ENCODE measurements at regions of chr7 and their contacts with region 1.

Region 1: GRCh38 chr7:106041140-106041717 is 70.9 kb downstream of the SYPL1 start:
- DNase-seq: peak in 3 of 9 donors; percentile 22 to 32 (median 25)
- ATAC-seq: peak; percentile 56
- H3K4me3 ChIP-seq: no peak overlapping the region
- H3K4me3 Mint-ChIP-seq: peak overlapping the region in 8 of 10 donors; percentile 5 to 68 (median 58)
- H3K27ac ChIP-seq: no peak overlapping the region
- H3K27ac Mint-ChIP-seq: peak overlapping the region in 8 of 9 donors; percentile 32 to 91 (median 73)
- H3K4me1 ChIP-seq: peaks cover 5 to 33% of the 10 kb centered on the region in 2 donors
- H3K4me1 Mint-ChIP-seq: peaks cover 18 to 58% (median 38%) of the 10 kb centered on the region in 7 donors
- H3K27me3 ChIP-seq: no peaks in the 10 kb centered on the region
- H3K27me3 Mint-ChIP-seq: peaks cover 0 to 48% (median 0%) of the 10 kb centered on the region in 5 donors

Region 2: GRCh38 chr7:105522062-105522936 is 518.9 kb before region 1 on chr7 and contains the start of gene PUS7:
- CTCF ChIA-PET with region 1: no interaction called
- POLR2A ChIA-PET with region 1: no interaction called
- intact Hi-C with region 1: loop called in 1 of 2 experiments (anchors 5 kb)
- DNase-seq: peak; percentile 53 to 81 (median 67)
- ATAC-seq: peak; percentile 97
- H3K4me3 ChIP-seq: peak within 1 kb of the TSS; percentile 68
- H3K4me3 Mint-ChIP-seq: peak within 1 kb of the TSS; percentile 92 to 99 (median 96)
- H3K27ac ChIP-seq: peak within 1 kb of the TSS; percentile 70
- H3K27ac Mint-ChIP-seq: peak within 1 kb of the TSS; percentile 74 to 96 (median 86)
- H3K4me1 ChIP-seq: peaks cover 5 to 8% of the 10 kb centered on the region in 2 donors
- H3K4me1 Mint-ChIP-seq: peaks cover 0 to 24% (median 17%) of the 10 kb centered on the region in 7 donors
- H3K27me3 ChIP-seq: no peaks in the 10 kb centered on the region
- H3K27me3 Mint-ChIP-seq: peaks cover 0 to 3% (median 0%) of the 10 kb centered on the region in 5 donors
- total RNA-seq, gene PUS7: 4.2 to 16.5 (median 5.4) TPM

Region 3: DNA sequence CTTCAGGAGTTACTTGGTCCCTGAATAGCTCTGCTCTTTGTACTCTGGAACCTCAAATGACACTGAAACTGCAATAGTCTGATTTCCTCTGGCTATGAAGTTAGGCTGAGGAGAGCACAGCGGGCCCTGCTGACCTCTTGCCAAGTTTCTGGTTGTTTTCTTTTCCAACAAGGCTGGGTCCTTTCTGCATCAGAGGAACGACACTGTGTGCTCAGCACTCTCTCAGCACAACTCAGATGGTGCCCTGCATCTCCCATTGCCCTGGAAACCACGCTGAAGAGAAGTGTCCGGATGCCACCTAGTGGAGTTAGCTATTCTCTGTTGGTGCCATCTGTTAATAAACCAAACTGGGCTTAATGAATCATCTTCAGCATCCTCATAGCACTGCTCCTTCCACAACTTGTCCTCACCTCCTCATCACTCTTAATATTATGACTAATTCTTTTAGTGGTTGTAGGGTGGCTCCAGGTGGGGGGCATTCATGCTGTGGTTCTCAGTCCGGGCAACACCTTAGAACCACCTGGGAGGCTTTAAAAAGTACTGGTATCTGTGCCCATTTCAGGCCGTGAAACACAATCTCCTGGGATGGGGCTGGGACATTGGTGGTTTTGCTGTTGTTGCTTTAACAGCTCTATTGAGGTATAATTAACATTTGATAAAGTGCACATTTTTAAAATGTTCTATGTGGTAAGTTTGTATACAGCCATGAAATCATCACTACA is 451.7 kb before region 1 on chr7:
- CTCF ChIA-PET with region 1: interaction called, 3 read pairs
- POLR2A ChIA-PET with region 1: no interaction called
- intact Hi-C with region 1: loop called (anchors 2 to 5 kb)
- DNase-seq: peak in 8 of 9 donors; percentile 16 to 61 (median 42)
- ATAC-seq: peak; percentile 87
- H3K4me3 ChIP-seq: no peak overlapping the region
- H3K4me3 Mint-ChIP-seq: no peak overlapping the region
- H3K27ac ChIP-seq: no peak overlapping the region
- H3K27ac Mint-ChIP-seq: peak overlapping the region in 3 of 9 donors; percentile 4 to 70 (median 69)
- H3K4me1 ChIP-seq: no peaks in the 10 kb centered on the region
- H3K4me1 Mint-ChIP-seq: peaks cover 0 to 17% (median 4%) of the 10 kb centered on the region in 7 donors
- H3K27me3 ChIP-seq: no peaks in the 10 kb centered on the region
- H3K27me3 Mint-ChIP-seq: peaks cover 0 to 9% (median 0%) of the 10 kb centered on the region in 5 donors

Region 4: DNA sequence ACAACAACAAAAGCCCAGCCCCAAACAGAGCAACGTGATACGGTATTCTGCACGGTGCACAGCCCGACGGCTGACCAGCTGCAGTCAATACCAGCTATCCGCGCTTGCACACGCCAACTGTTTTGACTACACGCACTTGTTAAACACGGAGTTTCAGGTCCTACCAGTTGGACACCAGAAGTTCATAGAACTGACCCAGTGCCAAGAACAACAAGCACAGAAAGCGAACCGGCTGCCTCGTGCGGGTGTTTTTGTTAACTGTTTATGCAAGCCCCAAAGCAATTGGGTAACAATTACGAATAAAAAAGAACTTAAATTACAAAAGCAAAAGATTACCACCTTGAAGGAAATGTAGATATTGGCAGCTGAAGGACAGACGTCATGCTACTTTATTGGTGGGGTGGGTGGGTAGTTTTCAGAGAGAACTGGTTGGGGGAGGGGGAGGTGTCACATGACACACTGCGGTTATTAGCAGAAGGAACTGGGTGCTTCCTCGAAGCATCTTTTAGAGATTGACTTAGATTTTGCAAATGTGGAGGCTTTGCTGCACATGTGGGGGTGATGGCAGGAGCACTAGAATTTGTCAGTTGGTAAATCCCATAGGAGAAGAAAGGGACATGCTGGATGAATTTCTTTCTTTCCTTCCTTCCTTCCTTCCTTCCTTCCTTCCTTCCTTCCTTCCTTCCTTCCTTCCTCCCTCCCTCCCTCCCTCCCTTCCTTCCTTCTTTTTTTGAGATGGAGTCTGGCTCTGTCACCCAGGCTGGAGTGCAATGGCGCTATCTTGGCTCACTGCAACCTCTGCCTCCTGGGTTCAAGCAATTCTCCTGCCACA is 349.3 kb before region 1 on chr7:
- CTCF ChIA-PET with region 1: interaction called, 4 read pairs
- POLR2A ChIA-PET with region 1: no interaction called
- intact Hi-C with region 1: loop called in 1 of 2 experiments (anchors 1 kb)
- DNase-seq: peak; percentile 22 to 94 (median 90)
- ATAC-seq: peak; percentile 89
- H3K4me3 ChIP-seq: peak overlapping the region; percentile 94
- H3K4me3 Mint-ChIP-seq: peak overlapping the region; percentile 84 to 98 (median 92)
- H3K27ac ChIP-seq: peak overlapping the region; percentile 83
- H3K27ac Mint-ChIP-seq: peak overlapping the region; percentile 95 to 100 (median 99)
- H3K4me1 ChIP-seq: peaks cover 19 to 21% of the 10 kb centered on the region in 2 donors
- H3K4me1 Mint-ChIP-seq: peaks cover 33 to 78% (median 65%) of the 10 kb centered on the region in 7 donors
- H3K27me3 ChIP-seq: no peaks in the 10 kb centered on the region
- H3K27me3 Mint-ChIP-seq: no peaks in the 10 kb centered on the region

Region 5: GRCh38 chr7:105849122-105849855 is 191.9 kb before region 1 on chr7:
- CTCF ChIA-PET with region 1: interaction called, 10 read pairs
- POLR2A ChIA-PET with region 1: no interaction called
- intact Hi-C with region 1: no loop called
- DNase-seq: peak; percentile 16 to 69 (median 60)
- ATAC-seq: peak; percentile 94
- H3K4me3 ChIP-seq: peak overlapping the region; percentile 38
- H3K4me3 Mint-ChIP-seq: peak overlapping the region; percentile 74 to 85 (median 83)
- H3K27ac ChIP-seq: peak overlapping the region; percentile 43
- H3K27ac Mint-ChIP-seq: peak overlapping the region; percentile 82 to 98 (median 92)
- H3K4me1 ChIP-seq: peaks cover 46 to 47% of the 10 kb centered on the region in 2 donors
- H3K4me1 Mint-ChIP-seq: peaks cover 44 to 78% (median 69%) of the 10 kb centered on the region in 7 donors
- H3K27me3 ChIP-seq: no peaks in the 10 kb centered on the region
- H3K27me3 Mint-ChIP-seq: peaks cover 0 to 2% (median 0%) of the 10 kb centered on the region in 5 donors

Region 6: GRCh38 chr7:105934572-105935185 is 106.5 kb before region 1 on chr7:
- CTCF ChIA-PET with region 1: interaction called, 10 read pairs
- POLR2A ChIA-PET with region 1: no interaction called
- intact Hi-C with region 1: loop called (anchors 1 to 5 kb)
- DNase-seq: peak in 3 of 9 donors; percentile 9 to 23 (median 10)
- ATAC-seq: no peak
- H3K4me3 ChIP-seq: no peak overlapping the region
- H3K4me3 Mint-ChIP-seq: no peak overlapping the region
- H3K27ac ChIP-seq: no peak overlapping the region
- H3K27ac Mint-ChIP-seq: peak overlapping the region in 3 of 9 donors; percentile 9 to 81 (median 10)
- H3K4me1 ChIP-seq: peaks cover 0 to 7% of the 10 kb centered on the region in 2 donors
- H3K4me1 Mint-ChIP-seq: peaks cover 0 to 33% (median 14%) of the 10 kb centered on the region in 7 donors
- H3K27me3 ChIP-seq: no peaks in the 10 kb centered on the region
- H3K27me3 Mint-ChIP-seq: peaks cover 0 to 36% (median 0%) of the 10 kb centered on the region in 5 donors

Region 7: GRCh38 chr7:106009403-106010226 is 31.6 kb before region 1 on chr7:
- CTCF ChIA-PET with region 1: interaction called, 12 read pairs
- POLR2A ChIA-PET with region 1: interaction called, 3 read pairs
- intact Hi-C with region 1: loop called (anchors 1 kb)
- DNase-seq: peak; percentile 73 to 85 (median 81)
- ATAC-seq: peak; percentile 99
- H3K4me3 ChIP-seq: no peak overlapping the region
- H3K4me3 Mint-ChIP-seq: peak overlapping the region in 9 of 10 donors; percentile 36 to 69 (median 55)
- H3K27ac ChIP-seq: no peak overlapping the region
- H3K27ac Mint-ChIP-seq: peak overlapping the region in 7 of 9 donors; percentile 38 to 93 (median 86)
- H3K4me1 ChIP-seq: peaks cover 0 to 30% of the 10 kb centered on the region in 2 donors
- H3K4me1 Mint-ChIP-seq: peaks cover 17 to 51% (median 45%) of the 10 kb centered on the region in 7 donors
- H3K27me3 ChIP-seq: no peaks in the 10 kb centered on the region
- H3K27me3 Mint-ChIP-seq: peaks cover 0 to 42% (median 0%) of the 10 kb centered on the region in 5 donors